CD4-positive, alpha-beta memory T cell (primary cell): ENCODE measurements at regions of chr22 and their contacts with region 1.

Region 1: DNA sequence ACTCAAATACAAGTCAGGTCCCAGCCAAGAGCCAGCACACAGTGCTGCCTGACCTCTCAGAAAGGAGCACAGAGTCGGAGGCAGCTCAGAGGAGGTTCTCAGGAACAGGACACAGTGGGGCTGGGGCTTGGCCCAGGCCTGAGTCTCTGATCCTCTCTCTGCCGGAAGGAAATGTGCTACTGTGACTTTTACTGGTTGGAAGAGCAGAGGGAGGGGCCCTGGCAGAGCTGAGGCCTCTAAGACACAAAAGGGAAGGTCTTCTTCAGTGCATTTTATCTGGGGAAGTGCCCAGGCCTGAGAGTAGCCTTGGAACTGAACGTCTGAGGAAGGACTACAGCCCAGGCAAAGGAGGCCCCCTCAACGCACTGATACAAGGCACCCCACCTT is 16.2 kb upstream of the CASTOR1 start:
- DNase-seq: peak; percentile 62 to 72 (median 65)
- H3K4me3 ChIP-seq: peak overlapping the region; percentile 60 to 64
- H3K4me3 Mint-ChIP-seq: peak overlapping the region; percentile 67 to 86 (median 82)
- H3K27ac ChIP-seq: peak overlapping the region; percentile 64
- H3K27ac Mint-ChIP-seq: peak overlapping the region; percentile 81 to 98 (median 95)
- H3K4me1 ChIP-seq: peaks cover 100% of the 10 kb centered on the region
- H3K4me1 Mint-ChIP-seq: peaks cover 74 to 100% (median 91%) of the 10 kb centered on the region in 4 donors
- H3K27me3 ChIP-seq: no peaks in the 10 kb centered on the region
- H3K27me3 Mint-ChIP-seq: no peaks in the 10 kb centered on the region

Region 2: DNA sequence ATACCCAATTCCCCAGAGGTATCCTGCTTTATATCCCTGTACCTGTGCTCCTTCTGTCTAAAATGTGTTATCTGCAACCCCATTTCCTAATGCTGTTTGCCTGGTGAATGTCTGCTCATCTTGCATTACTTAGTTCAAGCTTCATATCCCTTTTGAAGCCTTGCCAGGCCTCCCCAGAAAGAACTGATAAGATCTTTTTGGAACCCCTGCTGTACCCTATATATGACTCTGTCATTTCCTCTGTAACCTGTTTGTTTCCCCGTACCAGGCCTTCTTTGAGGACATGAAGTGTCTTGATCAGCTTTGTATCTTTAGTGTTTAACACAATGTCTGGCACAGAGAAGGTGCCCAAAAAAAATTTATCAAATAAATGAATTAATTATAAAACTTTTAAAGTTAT is 136.5 kb before region 1 on chr22:
- CTCF ChIA-PET with region 1: no interaction called
- POLR2A ChIA-PET with region 1: no interaction called
- intact Hi-C with region 1: no loop called
- DNase-seq: peak in 4 of 5 donors; percentile 25 to 58 (median 51)
- H3K4me3 ChIP-seq: no peak overlapping the region
- H3K4me3 Mint-ChIP-seq: no peak overlapping the region
- H3K27ac ChIP-seq: no peak overlapping the region
- H3K27ac Mint-ChIP-seq: no peak overlapping the region
- H3K4me1 ChIP-seq: peaks cover 36% of the 10 kb centered on the region
- H3K4me1 Mint-ChIP-seq: peaks cover 0 to 3% (median 0%) of the 10 kb centered on the region in 4 donors
- H3K27me3 ChIP-seq: no peaks in the 10 kb centered on the region
- H3K27me3 Mint-ChIP-seq: no peaks in the 10 kb centered on the region

Region 3: DNA sequence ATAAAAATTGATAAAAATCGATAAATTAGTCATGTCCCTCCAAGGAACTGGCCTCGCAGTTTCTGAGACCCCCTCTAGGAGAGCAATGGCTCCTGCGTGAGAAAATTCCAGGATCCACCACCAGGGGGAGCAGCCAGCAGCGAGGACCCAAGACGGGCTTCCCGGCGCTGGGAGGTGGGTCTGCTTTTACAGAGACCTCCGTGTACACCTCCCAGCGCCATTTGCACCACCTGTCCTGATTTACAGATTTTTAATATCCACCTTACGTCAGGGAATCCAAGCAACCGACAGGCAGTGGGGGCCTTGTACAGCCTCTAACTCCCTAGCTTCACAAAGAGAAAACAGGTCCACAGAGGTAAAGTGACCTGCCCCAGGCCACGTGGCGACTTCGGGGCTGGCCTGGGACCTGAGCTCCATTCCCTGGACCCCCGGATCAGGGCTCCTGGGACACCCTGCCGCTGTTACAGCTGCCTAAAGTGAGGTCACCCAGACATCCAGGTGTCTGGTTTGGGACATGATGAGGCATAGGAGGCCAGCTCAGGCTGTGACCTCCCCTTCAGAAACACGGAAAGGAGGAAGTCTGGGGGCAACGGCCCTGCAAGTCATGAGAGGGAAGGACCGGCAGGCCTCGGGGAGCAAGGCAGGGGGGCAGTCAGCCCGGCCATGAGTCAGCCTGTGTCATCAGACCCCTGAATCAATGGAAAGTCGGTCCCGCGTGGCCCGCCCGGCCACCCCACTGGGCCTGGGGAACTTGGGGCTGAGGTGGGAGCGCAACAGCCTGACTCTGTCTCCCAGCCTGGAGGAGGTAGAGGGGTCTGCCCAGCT is 42.4 kb before region 1 on chr22:
- CTCF ChIA-PET with region 1: interaction called, 6 read pairs
- POLR2A ChIA-PET with region 1: interaction called, 4 read pairs
- intact Hi-C with region 1: loop called (anchors 1 kb)
- DNase-seq: peak; percentile 64 to 76 (median 68)
- H3K4me3 ChIP-seq: peak overlapping the region in 1 of 2 donors; percentile 24
- H3K4me3 Mint-ChIP-seq: peak overlapping the region; percentile 70 to 83 (median 74)
- H3K27ac ChIP-seq: peak overlapping the region; percentile 36
- H3K27ac Mint-ChIP-seq: peak overlapping the region; percentile 61 to 90 (median 86)
- H3K4me1 ChIP-seq: peaks cover 48% of the 10 kb centered on the region
- H3K4me1 Mint-ChIP-seq: peaks cover 24 to 56% (median 42%) of the 10 kb centered on the region in 4 donors
- H3K27me3 ChIP-seq: no peaks in the 10 kb centered on the region
- H3K27me3 Mint-ChIP-seq: no peaks in the 10 kb centered on the region

Region 4: DNA sequence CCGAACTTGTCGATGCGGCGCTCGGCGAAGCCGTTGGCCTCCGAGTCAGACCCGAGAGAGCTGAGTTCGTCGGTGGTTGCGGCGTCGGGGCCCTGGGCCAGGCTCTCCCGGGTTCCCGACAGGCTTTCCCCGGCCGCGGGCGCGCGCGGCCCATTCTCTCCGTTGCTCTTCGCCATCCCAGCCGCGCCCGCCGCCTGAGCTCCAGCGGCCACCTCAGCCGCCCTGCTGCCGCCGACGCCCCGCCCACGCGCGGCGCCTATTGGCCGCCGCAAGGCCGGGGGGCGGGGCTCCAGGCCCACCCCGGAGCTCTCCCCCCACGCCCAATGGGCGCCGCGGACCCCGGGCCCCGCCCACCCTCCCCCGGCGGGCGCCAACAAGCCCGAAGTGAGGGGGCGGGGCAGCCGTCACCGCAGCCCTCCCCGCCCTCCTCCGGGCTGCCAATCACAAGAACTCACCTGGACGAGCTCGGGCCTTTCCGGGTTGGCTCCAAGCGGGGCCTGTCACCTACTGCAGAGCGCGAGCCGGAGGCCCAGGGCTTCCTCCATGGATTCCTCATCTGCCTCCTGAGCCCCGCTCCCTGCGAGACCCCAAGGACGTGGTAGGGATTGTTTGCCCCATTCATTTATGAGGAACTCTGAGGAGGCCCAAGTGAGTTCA is 21.3 kb after region 1 on chr22 and contains the start of gene TBC1D10A:
- CTCF ChIA-PET with region 1: interaction called, 14 read pairs
- POLR2A ChIA-PET with region 1: interaction called, 562 read pairs
- intact Hi-C with region 1: loop called (anchors 1 kb)
- DNase-seq: peak; percentile 92 to 94 (median 93)
- H3K4me3 ChIP-seq: peak within 1 kb of the TSS; percentile 76 to 78
- H3K4me3 Mint-ChIP-seq: peak within 1 kb of the TSS; percentile 90 to 95 (median 93)
- H3K27ac ChIP-seq: peak within 1 kb of the TSS; percentile 83
- H3K27ac Mint-ChIP-seq: peak within 1 kb of the TSS; percentile 90 to 97 (median 93)
- H3K4me1 ChIP-seq: peaks cover 50% of the 10 kb centered on the region
- H3K4me1 Mint-ChIP-seq: peaks cover 37 to 54% (median 45%) of the 10 kb centered on the region in 4 donors
- H3K27me3 ChIP-seq: no peaks in the 10 kb centered on the region
- H3K27me3 Mint-ChIP-seq: no peaks in the 10 kb centered on the region
- total RNA-seq, gene TBC1D10A: 62.2 to 76.8 TPM

Region 5: DNA sequence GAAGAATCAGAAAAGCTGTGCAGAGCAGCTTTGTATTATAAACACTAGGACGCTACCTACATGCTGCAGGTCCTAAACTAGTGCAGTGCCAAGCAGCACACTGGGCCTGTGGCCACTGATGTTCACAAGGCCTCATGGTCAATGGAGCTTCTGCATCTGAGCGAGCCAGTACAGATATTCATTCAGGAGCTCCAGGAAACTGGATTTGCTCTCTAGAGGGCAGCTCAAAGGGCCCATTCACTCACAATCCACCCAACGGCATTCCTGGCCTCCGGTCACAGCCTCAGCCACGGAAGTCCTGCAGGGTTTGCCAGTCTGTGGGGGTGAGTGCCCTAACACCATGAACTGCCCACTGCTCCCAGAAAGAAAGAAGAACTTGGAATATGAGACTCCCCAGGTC is 27.0 kb after region 1 on chr22:
- CTCF ChIA-PET with region 1: interaction called, 4 read pairs
- POLR2A ChIA-PET with region 1: interaction called, 562 read pairs
- intact Hi-C with region 1: no loop called
- DNase-seq: no peak
- H3K4me3 ChIP-seq: no peak overlapping the region
- H3K4me3 Mint-ChIP-seq: no peak overlapping the region
- H3K27ac ChIP-seq: no peak overlapping the region
- H3K27ac Mint-ChIP-seq: peak overlapping the region in 4 of 7 donors; percentile 38 to 63 (median 42)
- H3K4me1 ChIP-seq: peaks cover 10% of the 10 kb centered on the region
- H3K4me1 Mint-ChIP-seq: peaks cover 3 to 19% (median 13%) of the 10 kb centered on the region in 4 donors
- H3K27me3 ChIP-seq: no peaks in the 10 kb centered on the region
- H3K27me3 Mint-ChIP-seq: no peaks in the 10 kb centered on the region

Region 6: GRCh38 chr22:30348809-30349208 is 43.3 kb after region 1 on chr22:
- CTCF ChIA-PET with region 1: no interaction called
- POLR2A ChIA-PET with region 1: interaction called, 13 read pairs
- intact Hi-C with region 1: no loop called
- DNase-seq: no peak
- H3K4me3 ChIP-seq: no peak overlapping the region
- H3K4me3 Mint-ChIP-seq: peak overlapping the region in 4 of 8 donors; percentile 7 to 65 (median 47)
- H3K27ac ChIP-seq: no peak overlapping the region
- H3K27ac Mint-ChIP-seq: peak overlapping the region in 6 of 7 donors; percentile 22 to 92 (median 64)
- H3K4me1 ChIP-seq: peaks cover 82% of the 10 kb centered on the region
- H3K4me1 Mint-ChIP-seq: peaks cover 36 to 88% (median 59%) of the 10 kb centered on the region in 4 donors
- H3K27me3 ChIP-seq: no peaks in the 10 kb centered on the region
- H3K27me3 Mint-ChIP-seq: no peaks in the 10 kb centered on the region